PC-9 (cell line): ENCODE measurements at regions of chr5 and their contacts with region 1.

Region 1: DNA sequence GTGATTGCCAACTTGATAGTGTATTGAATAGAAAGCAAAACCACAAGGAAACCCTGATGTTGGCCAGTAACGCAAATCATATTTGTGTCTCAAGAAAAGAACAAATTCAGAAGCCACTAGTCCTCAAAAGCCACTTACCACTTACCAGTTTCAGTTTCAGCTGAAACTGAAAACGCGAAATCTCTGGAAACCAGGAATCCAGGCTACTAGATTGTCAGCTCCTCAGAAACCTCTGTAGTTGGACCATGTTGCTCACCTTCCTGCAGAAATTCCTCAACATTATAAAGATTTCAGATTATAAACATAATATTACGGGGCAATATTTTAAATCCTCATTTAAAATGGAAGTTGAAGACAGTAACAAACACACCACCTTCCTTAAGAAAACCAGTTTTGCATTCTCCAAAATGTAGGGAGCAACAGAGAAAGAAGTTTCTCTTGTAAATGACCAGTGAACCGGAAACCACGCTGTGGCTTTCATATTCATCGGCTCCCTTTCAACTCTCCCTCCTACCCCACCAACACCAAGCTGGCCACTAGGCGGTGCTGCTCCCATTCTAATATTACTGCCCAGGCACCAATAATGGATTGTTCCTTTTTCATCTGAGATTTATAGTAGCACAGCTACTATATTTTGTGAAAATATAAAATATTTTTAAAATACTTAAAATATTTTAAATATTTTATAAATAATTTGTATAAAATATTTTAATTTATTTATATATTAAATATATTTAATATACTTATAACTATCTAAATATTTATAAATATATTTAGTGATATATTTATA is 8.7 kb upstream of the TMED7 start:
- DNase-seq: peak; percentile 53 to 82
- H3K4me3 ChIP-seq: peak overlapping the region; percentile 37; the same call in 1 of the 2 replicates
- H3K27ac ChIP-seq: peak overlapping the region; percentile 11; the same call in 1 of the 2 replicates
- H3K4me1 ChIP-seq: peaks cover 7% of the 10 kb centered on the region
- H3K27me3 ChIP-seq: no peaks in the 10 kb centered on the region
- CTCF ChIP-seq: peak; percentile 86

Region 2: DNA sequence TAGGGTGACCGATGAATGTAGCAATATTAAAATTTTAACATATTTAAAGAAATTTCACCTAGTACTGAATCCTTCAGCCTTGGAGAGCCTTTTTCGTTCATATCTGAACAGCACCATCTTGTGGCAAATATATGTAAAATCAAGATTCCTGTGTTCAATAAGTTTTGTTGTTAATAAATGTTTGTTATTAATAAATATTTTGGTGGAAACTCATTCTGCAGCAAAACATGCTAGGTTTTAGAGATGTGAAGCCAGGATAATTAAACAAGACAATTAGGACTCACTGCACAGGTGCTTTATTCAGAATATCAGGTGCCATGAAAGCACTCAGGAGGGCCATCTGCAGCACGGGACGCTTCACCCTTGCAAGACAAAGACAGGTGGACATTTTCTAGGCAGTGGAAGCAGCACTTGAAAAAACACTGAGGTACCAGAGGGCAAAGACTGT is 47.9 kb before region 1 on chr5:
- CTCF ChIA-PET with region 1: no interaction called
- POLR2A ChIA-PET with region 1: no interaction called
- intact Hi-C with region 1: no loop called
- DNase-seq: no peak
- H3K4me3 ChIP-seq: no peak overlapping the region
- H3K27ac ChIP-seq: no peak overlapping the region
- H3K4me1 ChIP-seq: peaks cover 10% of the 10 kb centered on the region; the same call in 1 of the 2 replicates
- H3K27me3 ChIP-seq: no peaks in the 10 kb centered on the region
- CTCF ChIP-seq: peak; percentile 82

Region 3: GRCh38 chr5:115831163-115831768 is 196.7 kb after region 1 on chr5:
- CTCF ChIA-PET with region 1: interaction called, 3 read pairs
- POLR2A ChIA-PET with region 1: interaction called, 7 read pairs
- intact Hi-C with region 1: loop called (anchors 1 kb)
- DNase-seq: peak in 1 of 2 experiments; percentile 12
- H3K4me3 ChIP-seq: no peak overlapping the region
- H3K27ac ChIP-seq: no peak overlapping the region
- H3K4me1 ChIP-seq: no peaks in the 10 kb centered on the region
- H3K27me3 ChIP-seq: no peaks in the 10 kb centered on the region
- CTCF ChIP-seq: peak; percentile 82